CD8-positive, alpha-beta T cell (primary cell): ENCODE measurements at regions of chr12 and their contacts with region 1.

Region 1: GRCh38 chr12:22641353-22642053 is 16.5 kb downstream of the ETNK1 start:
- DNase-seq: no peak
- ATAC-seq: no peak
- H3K4me3 ChIP-seq: no peak overlapping the region
- H3K4me3 Mint-ChIP-seq: no peak overlapping the region
- H3K27ac ChIP-seq: no peak overlapping the region
- H3K27ac Mint-ChIP-seq: no peak overlapping the region
- H3K4me1 ChIP-seq: peaks cover 9% of the 10 kb centered on the region
- H3K4me1 Mint-ChIP-seq: peaks cover 50% of the 10 kb centered on the region
- H3K27me3 ChIP-seq: no peaks in the 10 kb centered on the region
- H3K27me3 Mint-ChIP-seq: no peaks in the 10 kb centered on the region
- CTCF ChIP-seq: no peak

Region 2: GRCh38 chr12:22658214-22658613 is 16.7 kb after region 1 on chr12:
- CTCF ChIA-PET with region 1: no interaction called
- POLR2A ChIA-PET with region 1: interaction called, 5 read pairs
- intact Hi-C with region 1: loop called in 1 of 2 experiments (anchors 2 kb)
- DNase-seq: no peak
- ATAC-seq: no peak
- H3K4me3 ChIP-seq: no peak overlapping the region
- H3K4me3 Mint-ChIP-seq: no peak overlapping the region
- H3K27ac ChIP-seq: no peak overlapping the region
- H3K27ac Mint-ChIP-seq: no peak overlapping the region
- H3K4me1 ChIP-seq: peaks cover under 1% of the 10 kb centered on the region
- H3K4me1 Mint-ChIP-seq: peaks cover 18% of the 10 kb centered on the region
- H3K27me3 ChIP-seq: no peaks in the 10 kb centered on the region
- H3K27me3 Mint-ChIP-seq: no peaks in the 10 kb centered on the region
- CTCF ChIP-seq: no peak